ENCODE measurements at regions of chr4 and their contacts with region 1.

Region 1: DNA sequence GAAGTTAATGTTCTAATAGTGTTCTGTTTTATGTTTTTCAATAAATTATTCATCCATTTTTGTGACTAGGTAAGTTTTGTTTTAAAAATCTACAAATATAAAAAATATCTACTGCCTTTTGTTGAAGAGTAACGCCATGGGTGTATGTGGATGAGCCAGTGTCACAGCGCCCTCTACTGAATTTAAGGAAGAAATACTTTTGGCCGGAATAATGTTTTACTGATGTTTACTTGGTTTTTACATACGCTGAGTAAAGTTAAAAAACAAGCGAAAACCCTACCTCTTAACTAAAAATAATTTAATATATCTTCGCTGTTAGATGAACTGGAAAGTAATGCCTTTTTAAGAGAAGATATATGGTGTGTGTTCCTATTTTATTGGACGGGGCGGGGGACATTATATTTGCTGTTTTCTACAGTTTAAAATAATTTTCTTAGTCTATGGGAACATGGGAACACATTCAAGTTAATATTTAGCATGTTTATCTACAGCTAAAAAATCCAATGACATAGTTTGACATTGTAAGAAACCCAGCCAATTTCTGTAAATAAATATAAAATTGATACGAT is 86.1 kb downstream of the CPE start:
- DNase-seq: peak in 1 of 2 experiments; percentile 19
- H3K4me3 ChIP-seq: no peak overlapping the region
- H3K4me3 Mint-ChIP-seq: no peak overlapping the region
- H3K27ac Mint-ChIP-seq: no peak overlapping the region
- H3K4me1 ChIP-seq: peaks cover 19% of the 10 kb centered on the region
- H3K4me1 Mint-ChIP-seq: peaks cover 13% of the 10 kb centered on the region
- H3K27me3 ChIP-seq: no peaks in the 10 kb centered on the region
- H3K27me3 Mint-ChIP-seq: no peaks in the 10 kb centered on the region
- CTCF ChIP-seq: peak; percentile 66 to 71

Region 2: GRCh38 chr4:164579273-164579942 is 885.5 kb before region 1 on chr4:
- CTCF ChIA-PET with region 1: no interaction called
- POLR2A ChIA-PET with region 1: no interaction called
- intact Hi-C with region 1: no loop called
- DNase-seq: no peak
- H3K4me3 ChIP-seq: no peak overlapping the region
- H3K4me3 Mint-ChIP-seq: no peak overlapping the region
- H3K27ac Mint-ChIP-seq: no peak overlapping the region
- H3K4me1 ChIP-seq: no peaks in the 10 kb centered on the region
- H3K4me1 Mint-ChIP-seq: no peaks in the 10 kb centered on the region
- H3K27me3 ChIP-seq: no peaks in the 10 kb centered on the region
- H3K27me3 Mint-ChIP-seq: peaks cover 2% of the 10 kb centered on the region
- CTCF ChIP-seq: no peak

Region 3: GRCh38 chr4:165131247-165131832 is 333.6 kb before region 1 on chr4:
- CTCF ChIA-PET with region 1: interaction called, 7 read pairs
- POLR2A ChIA-PET with region 1: no interaction called
- intact Hi-C with region 1: loop called (anchors 1 kb)
- DNase-seq: peak; percentile 64 to 80
- H3K4me3 ChIP-seq: no peak overlapping the region
- H3K4me3 Mint-ChIP-seq: no peak overlapping the region
- H3K27ac Mint-ChIP-seq: no peak overlapping the region
- H3K4me1 ChIP-seq: no peaks in the 10 kb centered on the region
- H3K4me1 Mint-ChIP-seq: peaks cover 14% of the 10 kb centered on the region
- H3K27me3 ChIP-seq: no peaks in the 10 kb centered on the region
- H3K27me3 Mint-ChIP-seq: peaks cover 14% of the 10 kb centered on the region
- CTCF ChIP-seq: peak; percentile 73 to 82

Region 4: DNA sequence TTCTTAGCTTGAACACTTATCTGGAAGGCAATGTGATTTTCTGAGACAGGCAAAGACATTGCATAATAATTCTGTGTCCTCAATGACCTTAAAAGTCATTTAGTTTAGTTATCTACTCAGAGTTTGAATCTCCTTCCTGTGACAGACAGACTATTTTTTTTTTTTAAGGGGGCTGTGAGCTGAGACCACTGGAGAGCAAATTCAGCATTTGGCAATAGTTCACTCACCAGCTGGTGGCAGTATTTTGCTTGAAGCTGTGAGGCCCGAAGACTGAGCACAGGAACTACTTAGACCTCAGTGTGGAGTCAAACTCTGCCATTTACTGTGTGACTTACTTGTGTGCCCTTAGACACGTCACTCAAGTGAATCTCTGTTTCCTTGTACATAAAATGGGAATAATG is 109.0 kb before region 1 on chr4:
- CTCF ChIA-PET with region 1: no interaction called
- POLR2A ChIA-PET with region 1: no interaction called
- intact Hi-C with region 1: loop called (anchors 1 kb)
- DNase-seq: peak in 1 of 2 experiments; percentile 12
- H3K4me3 ChIP-seq: no peak overlapping the region
- H3K4me3 Mint-ChIP-seq: no peak overlapping the region
- H3K27ac Mint-ChIP-seq: no peak overlapping the region
- H3K4me1 ChIP-seq: no peaks in the 10 kb centered on the region
- H3K4me1 Mint-ChIP-seq: no peaks in the 10 kb centered on the region
- H3K27me3 ChIP-seq: no peaks in the 10 kb centered on the region
- H3K27me3 Mint-ChIP-seq: peaks cover 3% of the 10 kb centered on the region
- CTCF ChIP-seq: peak; percentile 44

Region 5: GRCh38 chr4:165384598-165384997 is 80.3 kb before region 1 on chr4:
- CTCF ChIA-PET with region 1: interaction called, 4 read pairs
- POLR2A ChIA-PET with region 1: no interaction called
- intact Hi-C with region 1: loop called (anchors 1 kb)
- DNase-seq: peak in 1 of 2 experiments; percentile 11
- H3K4me3 ChIP-seq: no peak overlapping the region
- H3K4me3 Mint-ChIP-seq: no peak overlapping the region
- H3K27ac Mint-ChIP-seq: no peak overlapping the region
- H3K4me1 ChIP-seq: no peaks in the 10 kb centered on the region
- H3K4me1 Mint-ChIP-seq: peaks cover 7% of the 10 kb centered on the region
- H3K27me3 ChIP-seq: no peaks in the 10 kb centered on the region
- H3K27me3 Mint-ChIP-seq: peaks cover 6% of the 10 kb centered on the region
- CTCF ChIP-seq: peak in 1 of 2 experiments; percentile 23

Region 6: DNA sequence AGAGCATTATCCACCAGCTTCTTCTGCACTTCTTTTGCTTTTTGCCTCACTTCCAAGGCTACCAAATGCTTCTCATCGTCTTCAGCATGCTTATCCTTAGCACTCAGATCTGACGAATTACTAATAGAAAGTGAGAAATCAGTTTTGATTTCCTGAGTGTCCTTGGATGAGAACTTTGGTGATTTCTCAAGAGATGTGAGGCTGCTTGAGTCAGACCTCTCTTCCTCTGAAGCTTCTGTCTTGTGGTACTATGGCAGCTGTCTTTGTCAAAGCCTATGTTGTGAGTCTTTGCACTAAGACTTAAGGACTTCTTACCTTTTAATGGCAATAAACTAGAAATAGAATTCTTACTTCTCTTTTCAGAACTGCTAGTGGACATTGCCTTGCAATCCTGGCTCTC is 83.8 kb after region 1 on chr4:
- CTCF ChIA-PET with region 1: no interaction called
- POLR2A ChIA-PET with region 1: no interaction called
- intact Hi-C with region 1: no loop called
- DNase-seq: no peak
- H3K4me3 ChIP-seq: no peak overlapping the region
- H3K4me3 Mint-ChIP-seq: no peak overlapping the region
- H3K27ac Mint-ChIP-seq: no peak overlapping the region
- H3K4me1 ChIP-seq: no peaks in the 10 kb centered on the region
- H3K4me1 Mint-ChIP-seq: peaks cover 10% of the 10 kb centered on the region
- H3K27me3 ChIP-seq: no peaks in the 10 kb centered on the region
- H3K27me3 Mint-ChIP-seq: peaks cover 8% of the 10 kb centered on the region
- CTCF ChIP-seq: no peak